B cell (primary cell): ENCODE measurements at regions of chr17 and their contacts with region 1.

Region 1: DNA sequence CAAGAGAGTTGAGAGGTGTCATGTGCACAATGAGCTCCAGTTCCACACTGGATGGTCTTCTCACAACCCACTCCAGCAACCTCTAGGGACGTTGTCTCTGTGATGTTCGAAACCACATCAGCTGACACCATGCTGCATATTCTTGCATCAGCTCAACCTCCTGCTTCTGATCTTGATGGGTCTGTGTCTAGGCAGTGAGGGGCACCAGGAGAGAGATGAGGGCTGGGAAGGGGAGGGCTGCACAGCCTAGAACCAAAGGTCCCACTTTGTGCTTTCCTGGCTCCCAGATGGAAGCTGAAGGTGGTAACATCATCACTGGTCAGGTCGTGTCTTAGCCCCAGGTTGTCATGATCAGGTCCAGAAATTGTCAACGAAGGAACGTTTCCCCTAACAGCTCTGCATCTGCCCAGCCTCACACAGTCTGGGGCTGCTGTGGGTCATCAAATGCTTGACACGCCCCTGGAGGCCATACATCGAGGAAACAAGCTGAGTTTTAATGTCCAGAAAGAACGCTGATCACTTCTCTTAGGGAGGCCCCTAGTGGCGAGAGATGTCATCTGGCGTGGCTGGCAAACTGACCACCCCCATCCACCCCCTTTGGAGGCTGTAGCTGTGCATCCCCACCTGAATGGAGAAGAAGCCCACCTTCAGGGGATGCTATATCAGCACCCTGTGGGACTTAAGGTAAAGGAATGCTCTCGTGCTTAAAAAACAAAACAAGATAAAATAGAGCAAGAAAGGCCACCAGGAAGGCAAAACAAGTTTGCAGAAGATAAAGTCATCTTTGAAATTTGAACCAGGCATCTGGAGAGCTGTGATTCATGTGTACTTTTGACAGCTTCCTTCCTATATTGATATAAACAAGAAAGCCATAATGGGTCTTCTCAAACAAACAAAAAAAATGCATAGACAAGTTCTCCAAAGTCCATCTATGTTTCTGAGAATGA is 58.3 kb downstream of the WIPI1 start:
- DNase-seq: peak; percentile 55
- ATAC-seq: peak; percentile 76
- H3K4me3 ChIP-seq: no peak overlapping the region
- H3K4me3 Mint-ChIP-seq: peak overlapping the region; percentile 12
- H3K27ac ChIP-seq: no peak overlapping the region
- H3K27ac Mint-ChIP-seq: peak overlapping the region; percentile 35
- H3K4me1 ChIP-seq: peaks cover 0 to 6% of the 10 kb centered on the region in 2 donors
- H3K4me1 Mint-ChIP-seq: peaks cover 8% of the 10 kb centered on the region
- H3K27me3 ChIP-seq: no peaks in the 10 kb centered on the region
- H3K27me3 Mint-ChIP-seq: peaks cover 3% of the 10 kb centered on the region
- CTCF ChIP-seq: peak; percentile 40

Region 2: GRCh38 chr17:68057531-68057952 is 341.4 kb before region 1 on chr17:
- CTCF ChIA-PET with region 1: interaction called, 10 read pairs
- POLR2A ChIA-PET with region 1: no interaction called
- intact Hi-C with region 1: no loop called
- DNase-seq: peak; percentile 49
- ATAC-seq: peak; percentile 69
- H3K4me3 ChIP-seq: no peak overlapping the region
- H3K4me3 Mint-ChIP-seq: no peak overlapping the region
- H3K27ac ChIP-seq: no peak overlapping the region
- H3K27ac Mint-ChIP-seq: no peak overlapping the region
- H3K4me1 ChIP-seq: no peaks in the 10 kb centered on the region
- H3K4me1 Mint-ChIP-seq: no peaks in the 10 kb centered on the region
- H3K27me3 ChIP-seq: no peaks in the 10 kb centered on the region
- H3K27me3 Mint-ChIP-seq: no peaks in the 10 kb centered on the region
- CTCF ChIP-seq: peak; percentile 47

Region 3: GRCh38 chr17:68152161-68152571 is 246.8 kb before region 1 on chr17:
- CTCF ChIA-PET with region 1: no interaction called
- POLR2A ChIA-PET with region 1: no interaction called
- intact Hi-C with region 1: no loop called
- DNase-seq: no peak
- ATAC-seq: no peak
- H3K4me3 ChIP-seq: no peak overlapping the region
- H3K4me3 Mint-ChIP-seq: no peak overlapping the region
- H3K27ac ChIP-seq: no peak overlapping the region
- H3K27ac Mint-ChIP-seq: no peak overlapping the region
- H3K4me1 ChIP-seq: no peaks in the 10 kb centered on the region
- H3K4me1 Mint-ChIP-seq: no peaks in the 10 kb centered on the region
- H3K27me3 ChIP-seq: no peaks in the 10 kb centered on the region
- H3K27me3 Mint-ChIP-seq: no peaks in the 10 kb centered on the region
- CTCF ChIP-seq: no peak

Region 4: GRCh38 chr17:68172461-68172954 is 226.5 kb before region 1 on chr17:
- CTCF ChIA-PET with region 1: interaction called, 29 read pairs
- POLR2A ChIA-PET with region 1: no interaction called
- intact Hi-C with region 1: loop called (anchors 5 kb)
- DNase-seq: peak; percentile 87
- ATAC-seq: peak; percentile 94
- H3K4me3 ChIP-seq: no peak overlapping the region
- H3K4me3 Mint-ChIP-seq: no peak overlapping the region
- H3K27ac ChIP-seq: no peak overlapping the region
- H3K27ac Mint-ChIP-seq: no peak overlapping the region
- H3K4me1 ChIP-seq: peaks cover 0 to 9% of the 10 kb centered on the region in 2 donors
- H3K4me1 Mint-ChIP-seq: peaks cover 3% of the 10 kb centered on the region
- H3K27me3 ChIP-seq: no peaks in the 10 kb centered on the region
- H3K27me3 Mint-ChIP-seq: no peaks in the 10 kb centered on the region
- CTCF ChIP-seq: peak; percentile 99

Region 5: GRCh38 chr17:68255731-68256538 is 143.0 kb before region 1 on chr17:
- CTCF ChIA-PET with region 1: interaction called, 126 read pairs
- POLR2A ChIA-PET with region 1: no interaction called
- intact Hi-C with region 1: loop called (anchors 1 kb)
- DNase-seq: peak; percentile 42
- ATAC-seq: no peak
- H3K4me3 ChIP-seq: peak overlapping the region in 1 of 5 experiments; percentile 11
- H3K4me3 Mint-ChIP-seq: peak overlapping the region; percentile 72
- H3K27ac ChIP-seq: peak overlapping the region; percentile 30 to 84
- H3K27ac Mint-ChIP-seq: peak overlapping the region; percentile 85
- H3K4me1 ChIP-seq: peaks cover 68 to 73% of the 10 kb centered on the region in 2 donors
- H3K4me1 Mint-ChIP-seq: peaks cover 74% of the 10 kb centered on the region
- H3K27me3 ChIP-seq: no peaks in the 10 kb centered on the region
- H3K27me3 Mint-ChIP-seq: no peaks in the 10 kb centered on the region
- CTCF ChIP-seq: no peak

Region 6: GRCh38 chr17:68420065-68420464 is 21.1 kb after region 1 on chr17:
- CTCF ChIA-PET with region 1: interaction called, 12 read pairs
- POLR2A ChIA-PET with region 1: no interaction called
- intact Hi-C with region 1: no loop called
- DNase-seq: no peak
- ATAC-seq: no peak
- H3K4me3 ChIP-seq: no peak overlapping the region
- H3K4me3 Mint-ChIP-seq: no peak overlapping the region
- H3K27ac ChIP-seq: no peak overlapping the region
- H3K27ac Mint-ChIP-seq: no peak overlapping the region
- H3K4me1 ChIP-seq: no peaks in the 10 kb centered on the region
- H3K4me1 Mint-ChIP-seq: peaks cover under 1% of the 10 kb centered on the region
- H3K27me3 ChIP-seq: no peaks in the 10 kb centered on the region
- H3K27me3 Mint-ChIP-seq: no peaks in the 10 kb centered on the region
- CTCF ChIP-seq: no peak

Region 7: GRCh38 chr17:68576811-68577496 is 178.0 kb after region 1 on chr17:
- CTCF ChIA-PET with region 1: no interaction called
- POLR2A ChIA-PET with region 1: no interaction called
- intact Hi-C with region 1: no loop called
- DNase-seq: no peak
- ATAC-seq: no peak
- H3K4me3 ChIP-seq: no peak overlapping the region
- H3K4me3 Mint-ChIP-seq: no peak overlapping the region
- H3K27ac ChIP-seq: no peak overlapping the region
- H3K27ac Mint-ChIP-seq: no peak overlapping the region
- H3K4me1 ChIP-seq: no peaks in the 10 kb centered on the region
- H3K4me1 Mint-ChIP-seq: no peaks in the 10 kb centered on the region
- H3K27me3 ChIP-seq: no peaks in the 10 kb centered on the region
- H3K27me3 Mint-ChIP-seq: peaks cover 10% of the 10 kb centered on the region
- CTCF ChIP-seq: no peak